Lower leg skin (tissue), 4 donors: ENCODE measurements at regions of chr11 and their contacts with region 1.

Region 1: GRCh38 chr11:111777094-111778046 is 11.2 kb upstream of the PPP2R1B start:
- DNase-seq: peak in 1 of 2 donors; percentile 31
- H3K4me3 ChIP-seq: no peak overlapping the region
- CTCF ChIP-seq: peak in 1 of 3 donors; percentile 43
- POLR2A ChIP-seq: no peak

Region 2: DNA sequence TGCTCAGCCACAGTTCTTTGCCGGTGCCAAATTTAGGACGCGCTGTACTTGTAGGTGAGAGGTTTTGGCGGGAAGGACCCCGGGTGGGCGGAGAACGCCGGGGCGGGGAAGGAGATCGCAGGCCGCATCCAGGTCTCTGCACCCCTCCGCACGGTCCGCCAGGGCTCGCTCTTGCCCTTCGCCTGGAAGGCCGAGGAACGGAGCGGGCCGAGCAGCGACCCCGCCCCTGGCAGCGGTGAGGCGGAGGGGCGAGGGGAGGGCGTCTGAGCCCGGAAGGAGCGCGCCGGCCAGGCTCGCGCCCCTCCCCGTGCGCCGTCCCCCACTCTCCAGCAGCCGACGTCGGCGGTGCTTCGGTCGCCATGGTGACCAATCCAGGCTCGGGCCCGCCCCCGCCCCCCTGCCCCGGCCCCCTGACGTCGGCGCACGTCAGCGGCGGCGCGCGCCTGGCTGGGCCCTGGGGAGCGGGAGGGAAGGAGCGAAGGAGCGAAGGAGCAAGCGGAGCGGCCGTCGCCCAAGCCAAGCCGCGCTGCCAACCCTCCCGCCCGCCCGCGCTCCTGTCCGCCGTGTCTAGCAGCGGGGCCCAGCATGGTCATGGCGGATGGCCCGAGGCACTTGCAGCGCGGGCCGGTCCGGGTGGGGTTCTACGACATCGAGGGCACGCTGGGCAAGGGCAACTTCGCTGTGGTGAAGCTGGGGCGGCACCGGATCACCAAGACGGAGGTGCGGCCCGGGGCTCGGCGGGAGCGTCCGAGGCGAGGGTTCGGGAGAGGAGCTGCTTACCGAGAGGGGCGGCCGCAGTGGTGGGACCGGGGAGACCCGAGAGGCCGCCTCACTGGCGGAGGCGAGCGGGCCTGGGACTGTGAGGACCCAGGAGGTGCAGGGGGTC is 175.1 kb before region 1 on chr11 and contains the start of gene SIK2:
- intact Hi-C with region 1: loop called (anchors 2 kb)
- DNase-seq: peak; percentile 88 to 99
- H3K4me3 ChIP-seq: peak within 1 kb of the TSS; percentile 79
- CTCF ChIP-seq: peak in 1 of 3 donors; percentile 82
- POLR2A ChIP-seq: no peak
- total RNA-seq, gene SIK2: 15.4 to 19.5 (median 18.9) TPM